CD8-positive, alpha-beta memory T cell (primary cell): ENCODE measurements at regions of chr3 and their contacts with region 1.

Region 1: GRCh38 chr3:196739671-196740480 is at the start of gene PAK2:
- DNase-seq: peak; percentile 83 to 91 (median 88)
- H3K4me3 ChIP-seq: peak within 1 kb of the TSS; percentile 72
- H3K4me3 Mint-ChIP-seq: peak within 1 kb of the TSS; percentile 91 to 100 (median 99)
- H3K27ac ChIP-seq: peak within 1 kb of the TSS; percentile 82
- H3K27ac Mint-ChIP-seq: peak within 1 kb of the TSS; percentile 90 to 100 (median 98)
- H3K4me1 ChIP-seq: peaks cover 23% of the 10 kb centered on the region
- H3K4me1 Mint-ChIP-seq: peaks cover 33 to 42% (median 38%) of the 10 kb centered on the region in 3 donors
- H3K27me3 ChIP-seq: no peaks in the 10 kb centered on the region
- H3K27me3 Mint-ChIP-seq: no peaks in the 10 kb centered on the region
- total RNA-seq, gene PAK2: 81.2 to 85.4 TPM

Region 2: GRCh38 chr3:196568246-196569002 is 171.5 kb before region 1 on chr3 and contains the starts of genes FBXO45 and WDR53:
- CTCF ChIA-PET with region 1: no interaction called
- POLR2A ChIA-PET with region 1: interaction called, 11 read pairs
- DNase-seq: peak; percentile 92 to 97 (median 96)
- H3K4me3 ChIP-seq: peak within 1 kb of the TSS; percentile 93
- H3K4me3 Mint-ChIP-seq: peak within 1 kb of the TSS; percentile 95 to 99 (median 98)
- H3K27ac ChIP-seq: peak within 1 kb of the TSS; percentile 91
- H3K27ac Mint-ChIP-seq: peak within 1 kb of the TSS; percentile 94 to 99 (median 98)
- H3K4me1 ChIP-seq: peaks cover 36% of the 10 kb centered on the region
- H3K4me1 Mint-ChIP-seq: peaks cover 35 to 48% (median 45%) of the 10 kb centered on the region in 3 donors
- H3K27me3 ChIP-seq: no peaks in the 10 kb centered on the region
- H3K27me3 Mint-ChIP-seq: no peaks in the 10 kb centered on the region
- total RNA-seq, gene FBXO45: 29.3 to 30.1 TPM
- total RNA-seq, gene WDR53: 26.7 to 28.8 TPM

Region 3: DNA sequence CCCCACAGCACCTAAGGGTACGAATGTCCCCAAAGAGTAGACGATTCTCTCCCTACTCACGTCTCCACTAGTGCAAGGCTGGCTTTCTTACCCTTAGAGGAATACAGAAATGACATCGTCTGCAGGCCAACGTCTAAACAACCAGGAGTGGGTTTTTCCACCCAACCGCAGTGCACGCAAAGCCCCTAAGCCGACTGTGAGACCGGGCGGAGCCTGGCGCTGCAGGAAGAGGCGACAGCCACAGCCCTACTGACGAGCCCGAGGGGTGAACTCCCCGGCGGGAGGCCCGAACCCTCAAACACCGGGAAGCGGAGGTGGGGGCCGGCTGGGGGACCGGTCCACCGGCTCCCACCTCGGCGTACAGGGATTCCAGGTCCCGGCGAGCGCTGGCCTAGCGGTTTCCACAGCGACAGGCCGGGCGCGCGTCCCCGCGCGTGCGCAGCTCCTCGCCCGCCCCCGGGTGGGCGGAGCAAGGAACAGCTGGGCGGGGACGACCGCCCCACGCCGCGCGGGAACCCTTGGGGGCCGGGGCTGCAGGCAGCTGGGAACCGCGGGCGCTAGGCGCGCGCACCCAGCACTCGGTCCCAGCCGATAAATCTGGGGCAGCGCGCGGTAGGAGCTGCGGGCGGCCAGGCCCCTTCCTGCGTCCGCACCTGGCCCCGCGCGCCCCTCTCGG is 27.9 kb before region 1 on chr3 and contains the starts of genes CEP19 and PIGX:
- CTCF ChIA-PET with region 1: interaction called, 3 read pairs
- POLR2A ChIA-PET with region 1: interaction called, 12 read pairs
- DNase-seq: peak; percentile 89 to 96 (median 95)
- H3K4me3 ChIP-seq: peak within 1 kb of the TSS; percentile 76
- H3K4me3 Mint-ChIP-seq: peak within 1 kb of the TSS; percentile 86 to 97 (median 90)
- H3K27ac ChIP-seq: peak within 1 kb of the TSS; percentile 95
- H3K27ac Mint-ChIP-seq: peak within 1 kb of the TSS; percentile 92 to 100 (median 99)
- H3K4me1 ChIP-seq: peaks cover 16% of the 10 kb centered on the region
- H3K4me1 Mint-ChIP-seq: peaks cover 17 to 37% (median 33%) of the 10 kb centered on the region in 3 donors
- H3K27me3 ChIP-seq: no peaks in the 10 kb centered on the region
- H3K27me3 Mint-ChIP-seq: peaks cover 0 to 3% of the 10 kb centered on the region in 2 donors
- total RNA-seq, gene CEP19: 7.3 to 7.4 TPM
- total RNA-seq, gene PIGX: 49.0 to 50.5 TPM

Region 4: DNA sequence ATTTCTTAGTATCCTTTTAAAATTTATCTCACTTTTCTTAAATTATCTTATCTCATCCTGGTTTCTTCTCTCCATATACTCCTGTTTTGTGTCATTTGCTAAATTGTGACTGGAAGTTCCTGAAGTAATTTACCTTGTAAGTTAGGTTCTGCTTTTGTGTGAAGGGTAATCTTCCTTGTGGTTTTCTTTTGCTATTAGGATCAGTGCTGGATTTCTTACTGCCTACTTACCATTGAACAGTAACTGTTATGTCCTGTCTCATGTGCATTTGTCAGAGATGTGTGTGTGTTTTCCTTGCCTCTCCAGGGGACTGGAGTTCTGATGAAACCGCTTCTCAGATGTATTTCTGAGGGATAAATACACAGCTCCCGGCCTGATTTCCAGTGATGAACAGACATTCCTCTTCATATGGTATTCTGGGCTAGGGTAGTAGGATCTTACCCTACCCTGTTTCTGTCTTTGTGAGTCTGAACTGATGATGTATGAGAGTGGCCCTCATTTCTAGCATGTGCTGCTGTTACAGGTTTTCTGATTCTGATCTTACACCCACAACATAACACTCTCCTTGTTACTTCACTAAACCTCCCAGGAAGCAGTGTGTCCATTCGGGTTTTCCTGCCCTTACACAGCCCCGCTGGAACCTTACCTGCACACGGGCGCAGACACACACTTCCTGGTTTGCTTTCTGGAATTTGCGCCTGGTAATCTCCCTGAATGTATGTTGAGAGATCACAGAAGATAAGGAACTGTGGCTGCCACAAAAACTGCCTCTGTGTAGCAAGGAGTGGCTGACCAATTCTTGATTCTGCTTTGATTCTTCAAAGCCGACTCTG is 14.4 kb after region 1 on chr3:
- CTCF ChIA-PET with region 1: no interaction called
- POLR2A ChIA-PET with region 1: no interaction called
- DNase-seq: no peak
- H3K4me3 ChIP-seq: no peak overlapping the region
- H3K4me3 Mint-ChIP-seq: no peak overlapping the region
- H3K27ac ChIP-seq: no peak overlapping the region
- H3K27ac Mint-ChIP-seq: peak overlapping the region in 6 of 8 donors; percentile 4 to 88 (median 28)
- H3K4me1 ChIP-seq: no peaks in the 10 kb centered on the region
- H3K4me1 Mint-ChIP-seq: peaks cover 47 to 73% (median 62%) of the 10 kb centered on the region in 3 donors
- H3K27me3 ChIP-seq: no peaks in the 10 kb centered on the region
- H3K27me3 Mint-ChIP-seq: no peaks in the 10 kb centered on the region